ENCODE measurements at regions of chr9 and their contacts with region 1.

Region 1: GRCh38 chr9:14131310-14132088 is 182.4 kb downstream of the NFIB start:
- DNase-seq: no peak
- H3K4me3 ChIP-seq: no peak overlapping the region
- H3K27ac ChIP-seq: no peak overlapping the region
- H3K4me1 ChIP-seq: no peaks in the 10 kb centered on the region
- CTCF ChIP-seq: no peak

Region 2: GRCh38 chr9:13410566-13411031 is 720.9 kb before region 1 on chr9:
- CTCF ChIA-PET with region 1: no interaction called
- POLR2A ChIA-PET with region 1: no interaction called
- intact Hi-C with region 1: no loop called
- DNase-seq: no peak
- H3K4me3 ChIP-seq: no peak overlapping the region
- H3K27ac ChIP-seq: no peak overlapping the region
- H3K4me1 ChIP-seq: no peaks in the 10 kb centered on the region
- CTCF ChIP-seq: no peak

Region 3: GRCh38 chr9:14096258-14096922 is 35.1 kb before region 1 on chr9:
- CTCF ChIA-PET with region 1: no interaction called
- POLR2A ChIA-PET with region 1: no interaction called
- intact Hi-C with region 1: loop called (anchors 2 kb)
- DNase-seq: no peak
- H3K4me3 ChIP-seq: no peak overlapping the region
- H3K27ac ChIP-seq: no peak overlapping the region
- H3K4me1 ChIP-seq: no peaks in the 10 kb centered on the region
- CTCF ChIP-seq: no peak

Region 4: DNA sequence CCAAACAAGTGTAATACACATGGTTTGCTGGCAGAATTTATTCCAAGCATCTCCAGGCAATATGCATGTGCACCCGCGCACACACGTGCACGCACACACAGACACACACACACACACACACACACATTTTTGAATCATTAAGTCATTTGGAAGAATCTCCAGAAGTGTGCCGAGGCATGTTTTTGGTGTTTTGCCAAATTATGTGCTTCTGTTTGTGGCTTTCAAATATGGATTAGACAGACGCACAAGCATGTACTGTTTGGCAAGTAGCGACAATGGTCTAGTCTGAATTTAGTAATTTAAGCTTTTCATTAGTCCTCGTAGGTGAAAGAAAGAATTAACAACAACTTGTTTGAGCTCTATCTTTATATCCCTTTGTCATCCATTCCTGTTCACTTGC is 145.7 kb after region 1 on chr9:
- CTCF ChIA-PET with region 1: no interaction called
- POLR2A ChIA-PET with region 1: no interaction called
- intact Hi-C with region 1: no loop called
- DNase-seq: no peak
- H3K4me3 ChIP-seq: no peak overlapping the region
- H3K27ac ChIP-seq: no peak overlapping the region
- H3K4me1 ChIP-seq: peaks cover 30% of the 10 kb centered on the region
- CTCF ChIP-seq: no peak

Measured in OCI-LY7 (cell line).